ENCODE measurements at regions of chr2 and their contacts with region 1.

Region 1: DNA sequence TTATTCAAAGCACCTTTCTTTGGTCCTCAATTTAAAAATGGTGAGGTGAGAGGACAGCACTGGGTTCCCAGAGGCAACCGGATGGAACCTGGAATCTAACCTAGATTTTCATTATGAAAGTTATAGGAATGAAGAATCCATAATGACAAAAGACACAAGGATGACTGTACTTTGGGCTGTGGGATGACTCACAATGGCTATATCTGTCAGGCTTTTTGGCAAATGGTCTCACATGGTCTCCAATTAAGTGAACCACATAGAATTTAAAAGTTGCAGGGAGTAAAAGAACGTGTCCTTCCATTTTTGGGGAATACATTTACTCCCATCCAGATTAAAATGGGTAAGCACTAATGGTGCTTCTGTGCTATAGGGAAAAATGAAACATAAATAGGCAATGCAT is 31.8 kb upstream of the LYPD1 start:
- DNase-seq: no peak
- ATAC-seq: no peak
- H3K4me3 ChIP-seq: no peak overlapping the region
- H3K27ac ChIP-seq: no peak overlapping the region
- H3K4me1 ChIP-seq: no peaks in the 10 kb centered on the region
- H3K27me3 ChIP-seq: no peaks in the 10 kb centered on the region
- CTCF ChIP-seq: no peak

Region 2: DNA sequence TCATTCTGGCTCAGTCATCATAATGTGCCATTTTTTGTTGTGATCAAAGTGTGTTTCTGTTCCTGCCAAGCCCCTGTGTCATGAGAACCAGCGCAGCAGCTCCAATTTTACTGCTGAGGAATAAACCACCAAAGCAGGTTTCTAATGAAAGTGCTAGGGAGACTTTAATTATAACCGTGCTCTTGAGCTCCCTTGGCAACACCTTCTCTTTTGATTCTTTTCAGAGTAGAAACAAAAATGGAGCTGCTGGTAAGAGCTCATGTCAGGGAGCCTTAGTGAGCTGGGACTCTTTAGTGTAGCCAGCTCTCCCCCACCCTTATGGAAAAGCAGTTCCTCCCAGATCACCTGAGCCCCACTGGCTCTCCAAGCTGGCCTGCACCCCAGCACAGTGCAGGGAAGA is 106.1 kb before region 1 on chr2:
- intact Hi-C with region 1: no loop called
- DNase-seq: no peak
- ATAC-seq: no peak
- H3K4me3 ChIP-seq: no peak overlapping the region
- H3K27ac ChIP-seq: no peak overlapping the region
- H3K4me1 ChIP-seq: no peaks in the 10 kb centered on the region
- H3K27me3 ChIP-seq: peaks cover 0 to 21% (median 11%) of the 10 kb centered on the region in 7 donors
- CTCF ChIP-seq: no peak

Region 3: GRCh38 chr2:132789066-132789465 is 87.3 kb after region 1 on chr2:
- intact Hi-C with region 1: loop called in 1 of 10 experiments (anchors 1 kb)
- DNase-seq: no peak
- ATAC-seq: no peak
- H3K4me3 ChIP-seq: no peak overlapping the region
- H3K27ac ChIP-seq: no peak overlapping the region
- H3K4me1 ChIP-seq: no peaks in the 10 kb centered on the region
- H3K27me3 ChIP-seq: no peaks in the 10 kb centered on the region
- CTCF ChIP-seq: no peak

Region 4: DNA sequence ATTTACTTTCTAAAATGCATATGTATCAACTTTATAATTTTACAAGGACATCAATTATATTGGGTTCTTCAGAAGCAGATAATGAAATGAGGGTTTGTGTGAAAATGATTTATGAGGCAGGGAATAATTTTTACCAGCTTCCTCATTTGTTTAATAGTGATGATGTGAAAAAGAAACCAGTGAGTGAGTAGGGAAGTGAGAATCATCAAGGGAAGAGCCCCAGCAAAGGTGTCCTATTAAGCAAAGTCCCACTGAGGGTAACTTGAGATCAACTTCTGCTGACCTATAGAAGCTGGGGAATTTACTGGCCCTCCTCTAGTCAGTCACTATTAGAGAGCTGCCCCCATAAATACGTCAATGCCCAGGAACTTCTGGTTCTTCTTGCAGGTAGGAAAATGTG is 235.0 kb after region 1 on chr2:
- intact Hi-C with region 1: no loop called
- DNase-seq: no peak
- ATAC-seq: no peak
- H3K4me3 ChIP-seq: no peak overlapping the region
- H3K27ac ChIP-seq: no peak overlapping the region
- H3K4me1 ChIP-seq: peaks cover 0 to 7% (median 0%) of the 10 kb centered on the region in 9 donors
- H3K27me3 ChIP-seq: no peaks in the 10 kb centered on the region
- CTCF ChIP-seq: no peak

Measured in heart right ventricle (tissue), 16 donors.